PC-9 (cell line): ENCODE measurements at regions of chr6 and their contacts with region 1.

Region 1: GRCh38 chr6:70839286-70840266 is 117.3 kb downstream of the B3GAT2 start:
- DNase-seq: no peak
- H3K4me3 ChIP-seq: no peak overlapping the region
- H3K27ac ChIP-seq: no peak overlapping the region
- H3K4me1 ChIP-seq: no peaks in the 10 kb centered on the region
- H3K27me3 ChIP-seq: no peaks in the 10 kb centered on the region
- CTCF ChIP-seq: no peak

Region 2: DNA sequence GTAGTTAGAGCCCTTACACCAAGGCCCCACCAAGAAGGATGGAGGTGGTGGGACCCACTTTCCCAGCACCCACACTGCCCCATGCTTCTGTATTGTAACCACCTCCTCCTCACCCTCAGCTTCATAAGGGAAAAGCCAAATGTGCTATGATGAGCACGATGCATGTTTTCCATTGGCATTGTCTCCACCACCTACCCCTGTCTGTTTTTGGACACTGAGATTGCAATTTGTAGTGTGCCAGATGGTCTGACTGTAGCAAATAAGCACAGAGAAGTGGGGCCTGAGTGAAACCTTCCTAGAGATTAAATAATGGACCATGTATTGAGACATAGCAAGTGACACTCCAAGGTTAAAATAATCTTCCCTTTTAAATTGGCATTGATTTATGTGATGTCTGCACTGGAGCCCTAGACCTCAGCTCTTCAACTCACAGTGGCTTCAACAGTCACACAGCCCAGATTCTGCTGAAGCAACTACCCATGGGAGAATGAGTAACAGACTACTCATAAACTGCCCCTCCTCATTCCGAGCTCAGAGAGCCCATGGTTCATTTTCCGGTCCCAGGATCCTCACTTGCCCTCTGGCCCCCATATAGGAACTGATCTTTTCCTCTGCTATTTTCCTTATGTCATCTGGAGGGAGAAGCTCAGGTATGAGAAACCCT is 714.6 kb before region 1 on chr6:
- CTCF ChIA-PET with region 1: no interaction called
- POLR2A ChIA-PET with region 1: no interaction called
- intact Hi-C with region 1: no loop called
- DNase-seq: no peak
- H3K4me3 ChIP-seq: no peak overlapping the region
- H3K27ac ChIP-seq: no peak overlapping the region
- H3K4me1 ChIP-seq: no peaks in the 10 kb centered on the region
- H3K27me3 ChIP-seq: no peaks in the 10 kb centered on the region
- CTCF ChIP-seq: no peak

Region 3: GRCh38 chr6:70823651-70824050 is 15.9 kb before region 1 on chr6:
- CTCF ChIA-PET with region 1: interaction called, 22 read pairs
- POLR2A ChIA-PET with region 1: no interaction called
- intact Hi-C with region 1: no loop called
- DNase-seq: no peak
- H3K4me3 ChIP-seq: no peak overlapping the region
- H3K27ac ChIP-seq: no peak overlapping the region
- H3K4me1 ChIP-seq: no peaks in the 10 kb centered on the region
- H3K27me3 ChIP-seq: no peaks in the 10 kb centered on the region
- CTCF ChIP-seq: no peak